Adrenal gland (tissue), 19 donors: ENCODE measurements at regions of chr1 and their contacts with region 1.

Region 1: GRCh38 chr1:119275145-119276134 is 93.1 kb upstream of the HAO2 start:
- DNase-seq: peak; percentile 42 to 78 (median 69)
- H3K4me3 ChIP-seq: no peak overlapping the region
- H3K27ac ChIP-seq: no peak overlapping the region
- H3K4me1 ChIP-seq: peaks cover 0 to 8% of the 10 kb centered on the region in 2 donors
- H3K27me3 ChIP-seq: no peaks in the 10 kb centered on the region
- CTCF ChIP-seq: peak; percentile 77 to 89 (median 82)
- POLR2A ChIP-seq: no peak

Region 2: DNA sequence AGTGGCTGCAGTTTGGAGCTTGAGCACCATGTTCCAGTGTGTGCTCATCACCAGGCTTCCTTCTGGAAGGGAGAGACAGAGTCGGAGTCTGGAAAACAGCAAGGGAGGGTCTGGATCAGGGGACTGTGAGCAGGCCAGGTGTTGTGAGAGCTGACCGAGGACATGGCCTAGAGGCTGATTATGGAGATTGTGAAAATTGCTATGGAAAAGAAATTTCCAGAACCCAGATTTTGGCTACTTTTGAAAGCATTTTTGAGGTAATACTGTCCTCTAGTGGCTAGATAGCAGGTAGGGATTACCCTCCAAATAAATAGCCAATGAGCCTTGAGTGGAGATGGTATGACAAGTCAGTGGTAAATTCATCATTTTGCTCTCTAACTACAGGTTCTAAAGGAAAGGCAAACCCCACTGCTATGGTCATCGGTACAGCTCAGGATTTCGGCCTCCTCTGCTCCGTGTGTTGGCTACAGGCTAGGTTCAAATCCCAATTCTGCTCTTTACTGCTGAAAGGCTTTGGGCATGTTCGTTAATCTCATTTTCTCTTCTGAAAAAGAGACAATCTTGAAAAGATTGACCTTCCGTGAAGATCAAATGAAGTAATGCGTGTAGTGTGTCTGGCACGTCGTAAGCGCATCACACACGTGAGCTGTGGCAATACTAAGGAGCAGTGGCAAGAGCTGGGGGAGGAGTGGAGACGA is 92.1 kb after region 1 on chr1:
- intact Hi-C with region 1: loop called (anchors 5 kb)
- DNase-seq: peak in 1 of 7 donors; percentile 25
- H3K4me3 ChIP-seq: no peak overlapping the region
- H3K27ac ChIP-seq: no peak overlapping the region
- H3K4me1 ChIP-seq: no peaks in the 10 kb centered on the region
- H3K27me3 ChIP-seq: no peaks in the 10 kb centered on the region
- CTCF ChIP-seq: peak; percentile 85 to 99 (median 96)
- POLR2A ChIP-seq: no peak